OCI-LY7 (cell line): ENCODE measurements at regions of chr1 and their contacts with region 1.

Region 1: GRCh38 chr1:158607296-158607695 is 2.2 kb downstream of the OR10Z1 start:
- DNase-seq: no peak
- H3K4me3 ChIP-seq: no peak overlapping the region
- H3K27ac ChIP-seq: no peak overlapping the region
- H3K4me1 ChIP-seq: no peaks in the 10 kb centered on the region
- CTCF ChIP-seq: no peak

Region 2: GRCh38 chr1:158534496-158534895 is 72.8 kb before region 1 on chr1:
- CTCF ChIA-PET with region 1: no interaction called
- POLR2A ChIA-PET with region 1: no interaction called
- intact Hi-C with region 1: loop called (anchors 10 kb)
- DNase-seq: no peak
- H3K4me3 ChIP-seq: no peak overlapping the region
- H3K27ac ChIP-seq: no peak overlapping the region
- H3K4me1 ChIP-seq: no peaks in the 10 kb centered on the region
- CTCF ChIP-seq: no peak

Region 3: GRCh38 chr1:159113596-159114433 is 506.5 kb after region 1 on chr1:
- CTCF ChIA-PET with region 1: no interaction called
- POLR2A ChIA-PET with region 1: no interaction called
- intact Hi-C with region 1: no loop called
- DNase-seq: no peak
- H3K4me3 ChIP-seq: no peak overlapping the region
- H3K27ac ChIP-seq: no peak overlapping the region
- H3K4me1 ChIP-seq: no peaks in the 10 kb centered on the region
- CTCF ChIP-seq: no peak